Natural killer cell (primary cell): ENCODE measurements at regions of chr17 and their contacts with region 1.

Region 1: DNA sequence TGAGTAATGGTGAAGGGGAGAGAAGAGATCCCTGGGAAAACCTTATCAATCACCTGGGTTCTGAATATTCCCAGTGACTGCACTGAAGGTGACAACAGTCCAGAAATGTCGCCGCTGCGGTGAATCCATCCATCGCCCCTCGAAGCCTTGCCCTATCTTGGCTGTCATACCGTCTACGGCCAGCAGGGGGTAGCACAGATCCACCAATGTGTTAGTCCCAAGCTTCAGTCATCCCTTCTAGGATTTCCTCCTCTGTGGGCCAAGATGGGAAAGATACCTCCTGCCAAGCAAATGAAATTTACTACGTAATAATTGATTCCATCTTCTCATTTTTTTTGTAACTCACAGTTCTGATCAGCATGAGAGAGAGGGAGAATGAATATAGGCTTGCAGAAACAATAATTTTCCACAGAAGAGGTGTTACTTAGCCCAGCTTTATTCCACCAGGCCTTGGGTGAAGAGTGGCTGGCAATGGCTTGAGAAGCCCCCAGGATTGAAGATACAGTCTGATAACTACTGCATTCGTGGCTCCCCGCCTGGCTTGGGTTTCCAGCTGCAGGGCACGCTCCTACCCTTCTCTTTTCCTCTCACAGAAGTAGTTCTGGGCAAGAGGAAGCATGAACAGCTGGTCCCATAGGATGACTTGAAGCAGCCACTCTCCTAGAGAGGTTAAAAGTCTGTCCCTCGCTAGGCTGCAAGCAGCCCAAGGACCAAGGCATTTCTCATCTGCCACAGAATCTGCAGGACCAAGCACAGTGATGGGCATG is 2.6 kb upstream of the FMNL1 start:
- DNase-seq: peak; percentile 88 to 93
- ATAC-seq: peak; percentile 26 to 64 (median 31)
- H3K4me3 ChIP-seq: no peak overlapping the region
- H3K4me3 Mint-ChIP-seq: peak overlapping the region; percentile 81
- H3K27ac ChIP-seq: no peak overlapping the region
- H3K27ac Mint-ChIP-seq: peak overlapping the region in 1 of 2 donors; percentile 76
- H3K4me1 ChIP-seq: peaks cover 40% of the 10 kb centered on the region
- H3K4me1 Mint-ChIP-seq: peaks cover 42% of the 10 kb centered on the region in 2 donors
- H3K27me3 ChIP-seq: no peaks in the 10 kb centered on the region
- H3K27me3 Mint-ChIP-seq: no peaks in the 10 kb centered on the region
- CTCF ChIP-seq: peak; percentile 99

Region 2: GRCh38 chr17:45235416-45236281 is 16.6 kb after region 1 on chr17:
- intact Hi-C with region 1: loop called (anchors 1 kb)
- DNase-seq: peak; percentile 74 to 93
- ATAC-seq: peak; percentile 64 to 69 (median 66)
- H3K4me3 ChIP-seq: no peak overlapping the region
- H3K4me3 Mint-ChIP-seq: no peak overlapping the region
- H3K27ac ChIP-seq: peak overlapping the region; percentile 13
- H3K27ac Mint-ChIP-seq: peak overlapping the region; percentile 86 to 99
- H3K4me1 ChIP-seq: peaks cover 47% of the 10 kb centered on the region
- H3K4me1 Mint-ChIP-seq: peaks cover 53 to 73% of the 10 kb centered on the region in 2 donors
- H3K27me3 ChIP-seq: no peaks in the 10 kb centered on the region
- H3K27me3 Mint-ChIP-seq: no peaks in the 10 kb centered on the region
- CTCF ChIP-seq: peak; percentile 80

Region 3: GRCh38 chr17:45277216-45277849 is 58.3 kb after region 1 on chr17:
- intact Hi-C with region 1: loop called (anchors 2 kb)
- DNase-seq: peak; percentile 86 to 95
- ATAC-seq: peak; percentile 93 to 99 (median 99)
- H3K4me3 ChIP-seq: no peak overlapping the region
- H3K4me3 Mint-ChIP-seq: no peak overlapping the region
- H3K27ac ChIP-seq: no peak overlapping the region
- H3K27ac Mint-ChIP-seq: peak overlapping the region in 1 of 2 donors; percentile 66
- H3K4me1 ChIP-seq: no peaks in the 10 kb centered on the region
- H3K4me1 Mint-ChIP-seq: peaks cover 0 to 5% of the 10 kb centered on the region in 2 donors
- H3K27me3 ChIP-seq: no peaks in the 10 kb centered on the region
- H3K27me3 Mint-ChIP-seq: no peaks in the 10 kb centered on the region
- CTCF ChIP-seq: peak; percentile 72

Region 4: DNA sequence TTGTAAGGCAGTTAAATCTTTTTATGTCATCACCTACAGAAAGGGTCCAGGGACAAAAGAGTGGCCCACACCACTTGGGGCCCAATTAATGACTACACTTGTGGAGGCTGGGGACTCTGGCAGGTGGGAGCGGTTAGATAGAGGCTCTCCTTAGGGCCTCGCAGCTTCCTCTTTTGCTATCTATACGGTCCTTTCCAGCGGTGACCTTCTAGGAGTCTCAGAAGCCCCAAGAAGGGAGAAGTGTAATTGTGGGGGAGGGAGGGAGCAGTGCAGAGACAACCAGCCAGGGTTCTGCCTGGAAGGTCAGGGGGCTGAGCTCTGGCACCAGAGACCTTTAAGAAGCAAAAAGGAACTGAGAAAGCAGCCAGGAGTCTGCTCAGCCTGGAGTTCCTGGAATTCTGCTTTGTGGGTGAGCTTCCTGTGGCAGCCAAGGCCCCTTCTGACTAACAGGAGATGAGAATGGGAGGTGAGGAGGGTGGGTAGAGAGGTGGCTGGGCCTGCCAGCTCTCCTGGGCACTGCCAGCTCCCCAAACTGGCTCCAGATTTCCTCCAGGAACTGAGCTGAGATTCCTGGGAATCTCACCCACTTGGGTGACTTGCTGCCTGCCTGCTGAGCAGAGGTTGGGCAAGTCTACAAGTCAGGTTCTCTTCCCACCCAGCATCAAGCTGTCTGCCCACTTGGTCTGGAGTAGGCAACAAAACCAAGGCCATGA is 114.1 kb after region 1 on chr17:
- intact Hi-C with region 1: no loop called
- DNase-seq: no peak
- ATAC-seq: peak in 1 of 3 donors; percentile 35
- H3K4me3 ChIP-seq: no peak overlapping the region
- H3K4me3 Mint-ChIP-seq: no peak overlapping the region
- H3K27ac ChIP-seq: no peak overlapping the region
- H3K27ac Mint-ChIP-seq: no peak overlapping the region
- H3K4me1 ChIP-seq: peaks cover 16% of the 10 kb centered on the region
- H3K4me1 Mint-ChIP-seq: peaks cover 0 to 13% of the 10 kb centered on the region in 2 donors
- H3K27me3 ChIP-seq: no peaks in the 10 kb centered on the region
- H3K27me3 Mint-ChIP-seq: no peaks in the 10 kb centered on the region
- CTCF ChIP-seq: no peak

Region 5: DNA sequence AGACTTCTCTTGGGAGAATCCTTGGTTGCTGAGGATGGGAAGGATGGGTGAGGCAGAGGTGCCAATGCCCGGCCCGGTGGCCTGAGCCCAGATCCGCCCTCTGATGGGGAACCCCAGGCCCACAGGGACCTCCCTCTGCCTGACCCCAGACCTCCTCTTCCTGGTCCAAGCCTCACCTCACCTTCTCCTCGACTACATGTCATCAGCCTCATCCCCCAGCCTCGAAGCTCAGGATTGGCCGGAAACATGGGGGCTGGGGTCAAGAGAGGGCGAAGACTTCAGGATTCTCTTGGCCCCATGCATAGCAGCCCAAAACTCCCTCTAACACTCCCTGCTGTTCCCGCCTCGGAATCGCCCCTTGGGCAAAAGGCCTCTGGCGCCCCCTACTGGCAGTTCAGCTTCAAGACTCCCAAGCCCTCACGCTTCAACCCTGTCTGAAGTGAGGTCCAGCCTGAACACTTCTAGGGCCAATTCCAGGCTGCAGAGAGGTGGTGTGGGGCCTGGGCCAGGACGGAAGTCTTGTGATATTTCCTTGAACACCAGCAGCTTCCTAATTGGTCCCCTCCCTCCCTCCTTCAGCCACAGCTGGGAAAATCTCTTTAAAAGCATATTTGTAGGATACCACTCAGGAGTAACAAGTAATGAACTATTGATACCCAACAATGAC is 166.4 kb after region 1 on chr17:
- intact Hi-C with region 1: loop called (anchors 1 kb)
- DNase-seq: peak; percentile 86 to 93
- ATAC-seq: peak; percentile 90 to 98 (median 97)
- H3K4me3 ChIP-seq: no peak overlapping the region
- H3K4me3 Mint-ChIP-seq: no peak overlapping the region
- H3K27ac ChIP-seq: no peak overlapping the region
- H3K27ac Mint-ChIP-seq: no peak overlapping the region
- H3K4me1 ChIP-seq: peaks cover 7% of the 10 kb centered on the region
- H3K4me1 Mint-ChIP-seq: peaks cover 0 to 6% of the 10 kb centered on the region in 2 donors
- H3K27me3 ChIP-seq: no peaks in the 10 kb centered on the region
- H3K27me3 Mint-ChIP-seq: peaks cover 6 to 22% of the 10 kb centered on the region in 2 donors
- CTCF ChIP-seq: peak; percentile 94